ENCODE measurements at regions of chrX and their contacts with region 1.

Region 1: DNA sequence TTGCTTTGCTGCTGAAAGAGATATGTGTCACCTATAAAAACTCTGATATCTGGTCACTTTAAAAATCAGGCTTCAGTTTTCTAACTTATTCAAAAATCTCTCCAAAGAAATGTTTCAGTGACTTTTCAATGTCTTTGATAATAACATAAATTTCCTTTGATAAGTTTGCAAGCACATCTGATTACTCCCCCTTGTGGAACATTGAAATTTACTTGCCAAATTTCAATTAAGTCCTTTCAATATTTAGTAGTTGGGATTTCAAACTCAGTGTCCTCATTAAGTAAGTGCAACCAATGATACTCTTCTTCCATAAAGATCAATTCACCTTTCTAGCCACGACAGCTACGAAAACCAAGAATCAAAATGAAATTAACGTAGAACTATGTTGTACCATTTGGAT is 151.3 kb upstream of the FAM47C start:
- DNase-seq: no peak
- H3K4me3 ChIP-seq: no peak overlapping the region
- H3K27ac ChIP-seq: no peak overlapping the region
- H3K4me1 ChIP-seq: no peaks in the 10 kb centered on the region
- H3K27me3 ChIP-seq: no peaks in the 10 kb centered on the region
- CTCF ChIP-seq: no peak
- POLR2A ChIP-seq: no peak

Region 2: GRCh38 chrX:36787752-36788151 is 69.1 kb before region 1 on chrX:
- intact Hi-C with region 1: loop called (anchors 10 kb)
- DNase-seq: peak; percentile 4 to 54
- H3K4me3 ChIP-seq: no peak overlapping the region
- H3K27ac ChIP-seq: no peak overlapping the region
- H3K4me1 ChIP-seq: no peaks in the 10 kb centered on the region
- H3K27me3 ChIP-seq: no peaks in the 10 kb centered on the region
- CTCF ChIP-seq: no peak
- POLR2A ChIP-seq: no peak

Region 3: DNA sequence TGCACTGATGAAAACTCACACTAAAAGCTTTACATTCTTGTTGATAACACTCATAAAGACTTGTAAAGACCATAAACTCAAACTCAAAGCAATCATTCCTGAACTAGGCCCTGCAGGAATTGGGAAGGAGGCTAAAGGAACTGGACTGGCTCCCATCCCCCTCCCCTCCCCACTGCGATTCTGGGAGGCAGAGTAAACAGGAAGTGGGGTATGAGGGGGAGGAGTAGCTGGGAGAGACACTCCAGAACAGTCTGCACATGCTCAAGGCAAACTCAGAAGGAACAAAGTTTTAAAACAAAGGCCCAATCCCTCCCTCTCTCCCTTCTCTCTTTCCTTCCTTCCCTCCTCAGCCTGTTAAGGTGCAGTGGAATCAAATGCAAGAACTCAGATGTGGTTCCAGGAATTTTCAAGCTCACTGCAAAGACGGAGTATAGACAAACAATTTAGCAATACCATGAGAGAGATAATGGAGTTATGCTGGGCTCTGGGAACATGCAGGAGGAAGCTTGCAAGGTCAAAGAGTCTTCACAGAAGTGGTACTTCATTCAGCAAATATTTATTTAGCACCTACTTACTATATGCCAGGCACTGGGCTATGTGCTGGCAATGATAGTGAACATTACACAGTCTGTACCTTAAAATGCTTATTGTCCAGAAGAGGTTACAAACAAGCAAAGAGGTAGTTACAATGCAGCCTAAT is 1960.3 kb after region 1 on chrX:
- intact Hi-C with region 1: no loop called
- DNase-seq: no peak
- H3K4me3 ChIP-seq: no peak overlapping the region
- H3K27ac ChIP-seq: peak overlapping the region; percentile 22
- H3K4me1 ChIP-seq: peaks cover 7% of the 10 kb centered on the region
- H3K27me3 ChIP-seq: no peaks in the 10 kb centered on the region
- CTCF ChIP-seq: no peak
- POLR2A ChIP-seq: no peak